Mammary epithelial cell (primary cell): ENCODE measurements at regions of chr13 and their contacts with region 1.

Region 1: DNA sequence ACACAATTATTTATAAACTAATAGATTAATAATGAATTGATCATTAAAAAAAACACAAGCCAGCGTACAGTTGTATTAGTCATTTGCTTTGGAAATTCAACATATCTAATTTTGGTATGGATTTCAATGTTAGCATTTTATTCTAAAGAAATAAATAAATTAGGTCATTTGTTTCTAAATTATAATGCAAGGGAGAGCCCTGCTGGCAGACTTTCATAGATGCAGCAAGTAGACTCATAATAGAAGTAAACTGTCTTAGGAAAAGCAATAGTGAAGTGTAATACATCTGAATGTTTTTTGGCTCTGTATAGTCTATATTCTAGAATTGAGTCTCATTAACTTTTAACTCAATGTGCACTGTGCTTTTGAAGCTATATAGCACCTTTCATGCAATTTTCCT is 982.4 kb upstream of the MIR17HG start:
- DNase-seq: peak; percentile 8
- H3K4me3 ChIP-seq: no peak overlapping the region
- H3K27ac ChIP-seq: no peak overlapping the region
- H3K4me1 ChIP-seq: no peaks in the 10 kb centered on the region
- H3K27me3 ChIP-seq: no peaks in the 10 kb centered on the region
- CTCF ChIP-seq: peak; percentile 21 to 50

Region 2: DNA sequence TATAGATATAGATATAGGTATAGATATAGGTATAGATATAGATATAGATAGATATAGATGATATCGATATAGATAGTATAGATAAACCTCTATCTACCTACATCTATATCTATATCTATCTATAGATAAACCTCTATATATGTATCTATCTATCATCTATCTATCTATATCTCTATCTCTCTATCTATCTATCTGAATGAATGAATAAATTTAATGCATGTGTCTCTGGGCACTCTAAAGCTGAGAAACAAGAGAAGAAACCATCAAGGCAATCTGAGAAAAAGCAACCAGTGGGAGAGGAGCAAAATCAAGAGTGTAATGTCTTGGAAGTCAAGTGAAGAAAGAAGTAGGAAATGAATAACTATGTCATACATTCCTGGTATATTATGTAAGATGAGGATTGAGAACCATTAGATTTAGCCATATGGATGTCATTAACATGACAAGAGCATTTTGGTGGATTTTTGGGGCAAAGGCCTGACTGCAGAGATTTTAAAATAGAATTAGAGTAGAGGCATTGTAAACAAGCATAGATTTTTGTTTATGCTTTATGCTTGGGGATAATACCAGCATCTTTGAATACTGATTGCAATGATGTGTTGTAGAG is 280.3 kb before region 1 on chr13:
- CTCF ChIA-PET with region 1: no interaction called
- dilution Hi-C with region 1: no loop called
- in situ Hi-C with region 1: no loop called
- intact Hi-C with region 1: loop called (anchors 10 kb)
- DNase-seq: no peak
- H3K4me3 ChIP-seq: no peak overlapping the region
- H3K27ac ChIP-seq: no peak overlapping the region
- H3K4me1 ChIP-seq: no peaks in the 10 kb centered on the region
- H3K27me3 ChIP-seq: no peaks in the 10 kb centered on the region
- CTCF ChIP-seq: no peak

Region 3: DNA sequence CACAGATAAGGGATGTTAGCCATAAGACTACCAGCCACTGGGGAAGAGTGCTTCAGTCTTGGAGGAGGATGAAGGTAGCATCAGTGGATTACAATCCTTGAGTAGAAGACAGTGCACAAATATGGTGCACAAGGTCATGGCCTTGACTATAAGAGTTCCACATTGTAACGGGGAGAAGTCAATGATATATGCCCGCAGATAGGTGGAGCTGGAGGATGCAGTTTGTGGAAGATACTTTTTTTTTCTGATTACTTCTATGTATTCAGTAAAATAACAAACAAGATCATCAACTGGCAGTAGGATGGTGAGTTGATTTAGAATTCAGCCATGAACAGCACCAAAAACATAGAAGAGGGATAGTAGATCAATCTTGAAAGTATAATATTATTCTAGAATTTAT is 55.6 kb after region 1 on chr13:
- CTCF ChIA-PET with region 1: no interaction called
- dilution Hi-C with region 1: no loop called
- in situ Hi-C with region 1: no loop called
- intact Hi-C with region 1: no loop called
- DNase-seq: no peak
- H3K4me3 ChIP-seq: no peak overlapping the region
- H3K27ac ChIP-seq: no peak overlapping the region
- H3K4me1 ChIP-seq: peaks cover 10% of the 10 kb centered on the region
- H3K27me3 ChIP-seq: no peaks in the 10 kb centered on the region
- CTCF ChIP-seq: peak in 1 of 2 donors; percentile 25